PC-9 (cell line): ENCODE measurements at regions of chr3 and their contacts with region 1.

Region 1: DNA sequence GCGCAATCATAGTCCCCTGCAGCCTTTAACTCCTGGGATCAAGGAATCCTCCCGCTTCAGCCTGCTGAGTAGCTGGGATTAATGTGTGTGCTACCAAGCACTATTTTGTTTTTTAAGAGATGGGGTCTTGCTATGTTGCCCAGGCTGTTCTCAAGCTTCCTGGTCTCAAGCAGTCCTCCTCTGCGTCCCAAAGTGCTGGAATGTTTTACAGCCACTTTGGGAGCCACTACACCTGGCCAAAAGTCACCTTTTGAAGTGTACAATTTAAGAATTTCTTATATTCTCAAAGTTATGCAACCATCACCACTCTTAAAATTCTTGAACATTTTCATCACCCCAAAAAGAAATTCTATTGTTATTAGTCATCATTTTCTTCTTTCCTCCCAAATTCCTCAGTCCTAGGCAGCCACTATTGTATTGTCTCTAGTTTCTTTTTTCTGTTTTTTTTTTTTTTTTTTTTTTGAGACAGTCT is 17.8 kb downstream of the CDV3 start:
- DNase-seq: peak; percentile 51 to 87
- H3K4me3 ChIP-seq: no peak overlapping the region
- H3K27ac ChIP-seq: peak overlapping the region; percentile 68
- H3K4me1 ChIP-seq: peaks cover 26% of the 10 kb centered on the region
- H3K27me3 ChIP-seq: no peaks in the 10 kb centered on the region
- CTCF ChIP-seq: no peak

Region 2: GRCh38 chr3:133620066-133620784 is 28.9 kb after region 1 on chr3:
- CTCF ChIA-PET with region 1: no interaction called
- POLR2A ChIA-PET with region 1: interaction called, 18 read pairs
- intact Hi-C with region 1: no loop called
- DNase-seq: no peak
- H3K4me3 ChIP-seq: no peak overlapping the region
- H3K27ac ChIP-seq: no peak overlapping the region
- H3K4me1 ChIP-seq: no peaks in the 10 kb centered on the region
- H3K27me3 ChIP-seq: no peaks in the 10 kb centered on the region
- CTCF ChIP-seq: no peak

Region 3: DNA sequence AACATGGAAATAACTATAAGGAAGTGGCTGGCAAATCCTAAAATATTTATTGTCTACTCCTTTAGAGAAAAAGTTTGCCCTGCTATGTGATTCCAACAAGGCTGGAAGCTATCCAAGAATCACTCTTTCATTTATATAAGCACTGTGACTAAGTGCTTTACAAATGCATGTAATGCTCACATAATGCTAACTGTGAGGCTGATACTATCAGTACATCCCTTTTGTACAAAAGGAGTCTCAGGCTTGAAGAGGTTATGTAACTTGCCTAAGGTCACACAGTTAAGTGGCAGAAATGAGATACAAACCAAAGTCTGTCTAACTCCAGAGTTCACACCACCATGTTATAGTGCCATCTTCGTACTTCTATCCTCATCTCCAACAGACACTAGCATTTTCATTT is 53.5 kb after region 1 on chr3:
- CTCF ChIA-PET with region 1: no interaction called
- POLR2A ChIA-PET with region 1: interaction called, 8 read pairs
- intact Hi-C with region 1: loop called (anchors 5 kb)
- DNase-seq: peak; percentile 19 to 93
- H3K4me3 ChIP-seq: no peak overlapping the region
- H3K27ac ChIP-seq: peak overlapping the region; percentile 58
- H3K4me1 ChIP-seq: peaks cover 15% of the 10 kb centered on the region
- H3K27me3 ChIP-seq: no peaks in the 10 kb centered on the region
- CTCF ChIP-seq: no peak

Region 4: DNA sequence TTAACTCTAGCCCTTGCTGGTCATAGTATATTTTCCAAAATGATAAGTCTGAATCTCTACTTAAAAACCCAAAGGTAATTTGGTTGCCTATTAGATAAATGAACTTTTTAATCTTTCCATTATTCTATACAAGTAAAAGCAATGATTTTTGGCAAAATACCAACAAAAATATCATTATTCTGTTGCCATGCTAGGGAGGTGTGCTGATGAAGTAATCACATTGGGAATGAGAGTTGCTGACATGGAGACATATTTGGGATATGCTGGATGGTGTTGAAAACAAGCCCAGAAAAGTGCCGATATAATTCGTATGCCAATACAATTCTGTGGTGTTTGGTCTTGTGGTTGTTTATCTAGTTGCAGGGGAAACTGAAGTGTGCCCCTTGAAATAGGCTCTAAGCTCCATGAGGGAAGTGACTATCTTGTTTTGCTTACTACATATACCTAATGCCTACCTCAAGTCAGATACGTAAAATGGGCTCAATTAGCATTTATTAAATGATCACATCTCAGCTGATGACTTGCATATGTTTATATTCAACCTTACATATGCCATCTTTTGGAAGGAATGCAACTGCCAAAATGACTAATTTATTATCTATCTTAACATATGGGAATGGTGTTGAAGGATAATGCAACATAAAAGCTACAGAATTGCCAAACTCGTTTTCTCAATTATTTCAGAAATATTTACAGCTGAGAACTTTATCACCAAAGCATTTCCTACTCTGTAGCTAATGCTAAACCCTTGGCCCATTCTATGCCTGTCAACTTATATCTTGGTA is 64.6 kb after region 1 on chr3:
- CTCF ChIA-PET with region 1: no interaction called
- POLR2A ChIA-PET with region 1: no interaction called
- intact Hi-C with region 1: no loop called
- DNase-seq: no peak
- H3K4me3 ChIP-seq: no peak overlapping the region
- H3K27ac ChIP-seq: no peak overlapping the region
- H3K4me1 ChIP-seq: peaks cover 10% of the 10 kb centered on the region; the same call in 1 of the 2 replicates
- H3K27me3 ChIP-seq: no peaks in the 10 kb centered on the region
- CTCF ChIP-seq: no peak

Region 5: GRCh38 chr3:133805527-133806475 is 214.5 kb after region 1 on chr3 and contains the start of gene SRPRB:
- CTCF ChIA-PET with region 1: no interaction called
- POLR2A ChIA-PET with region 1: no interaction called
- intact Hi-C with region 1: loop called (anchors 5 kb)
- DNase-seq: peak; percentile 89 to 92
- H3K4me3 ChIP-seq: peak within 1 kb of the TSS; percentile 79
- H3K27ac ChIP-seq: peak within 1 kb of the TSS; percentile 43; the same call in 1 of the 2 replicates
- H3K4me1 ChIP-seq: peaks cover 18% of the 10 kb centered on the region
- H3K27me3 ChIP-seq: no peaks in the 10 kb centered on the region
- CTCF ChIP-seq: no peak
- total RNA-seq, gene SRPRB: 25.5 and 29.8 TPM in 2 replicates

Region 6: DNA sequence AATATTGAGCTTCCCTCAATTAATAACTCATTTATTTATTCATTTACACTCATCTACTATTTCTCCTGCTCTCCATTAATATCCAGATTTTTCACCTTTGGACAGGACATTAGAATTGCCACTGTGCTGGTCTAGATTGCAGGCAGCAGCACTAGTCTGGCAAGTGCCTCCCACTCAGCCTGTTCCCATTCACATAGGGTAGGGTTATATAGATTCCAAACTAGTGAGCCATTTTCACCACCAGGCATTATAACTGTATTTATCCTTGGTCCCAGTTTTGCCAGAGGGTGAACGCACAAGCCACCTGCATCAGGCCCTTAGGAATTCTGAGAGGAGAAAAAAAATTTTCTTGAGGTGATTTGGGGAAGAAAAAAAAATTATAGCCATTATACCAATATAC is 850.0 kb after region 1 on chr3:
- CTCF ChIA-PET with region 1: interaction called, 10 read pairs
- POLR2A ChIA-PET with region 1: no interaction called
- intact Hi-C with region 1: no loop called
- DNase-seq: peak; percentile 23 to 47
- H3K4me3 ChIP-seq: no peak overlapping the region
- H3K27ac ChIP-seq: no peak overlapping the region
- H3K4me1 ChIP-seq: peaks cover 30% of the 10 kb centered on the region
- H3K27me3 ChIP-seq: no peaks in the 10 kb centered on the region
- CTCF ChIP-seq: no peak